A673 (cell line): ENCODE measurements at regions of chr15 and their contacts with region 1.

Region 1: GRCh38 chr15:80120636-80121035 is 32.2 kb upstream of the FAH start:
- DNase-seq: no peak
- H3K4me3 ChIP-seq: no peak overlapping the region
- H3K27ac ChIP-seq: no peak overlapping the region
- H3K4me1 ChIP-seq: peaks cover 3% of the 10 kb centered on the region
- H3K27me3 ChIP-seq: no peaks in the 10 kb centered on the region
- CTCF ChIP-seq: no peak

Region 2: DNA sequence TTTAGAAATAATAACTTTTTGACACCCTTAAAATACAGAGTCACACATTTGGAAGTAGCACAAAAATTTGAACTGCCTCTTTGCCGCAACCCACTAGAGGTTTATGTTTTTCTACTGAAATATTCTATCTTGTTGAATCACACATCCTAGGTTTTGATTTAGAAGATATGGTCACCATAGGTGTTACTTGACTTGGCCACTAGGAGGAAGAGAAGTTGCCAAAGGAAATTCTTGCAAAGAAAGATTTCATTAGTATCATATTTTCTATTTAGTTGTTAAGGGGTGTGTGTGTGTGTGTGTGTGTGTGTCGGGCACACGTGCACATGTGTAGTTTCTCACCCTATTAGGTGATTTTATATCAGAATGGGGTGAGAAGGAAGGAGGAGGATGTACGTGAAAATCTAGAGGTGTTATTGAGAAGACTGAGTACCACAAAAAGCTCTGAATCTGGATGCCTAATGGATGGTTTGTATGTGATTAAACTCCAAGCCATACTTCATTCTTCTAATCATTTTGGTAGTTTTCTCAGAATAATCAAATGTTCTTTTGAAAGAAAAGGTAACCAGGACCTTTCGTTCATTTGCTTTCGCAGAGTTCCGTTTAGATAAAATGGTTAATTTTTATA is 29.6 kb before region 1 on chr15:
- CTCF ChIA-PET with region 1: no interaction called
- POLR2A ChIA-PET with region 1: no interaction called
- intact Hi-C with region 1: loop called (anchors 1 kb)
- DNase-seq: no peak
- H3K4me3 ChIP-seq: no peak overlapping the region
- H3K27ac ChIP-seq: no peak overlapping the region
- H3K4me1 ChIP-seq: peaks cover 7% of the 10 kb centered on the region
- H3K27me3 ChIP-seq: no peaks in the 10 kb centered on the region
- CTCF ChIP-seq: peak; percentile 40

Region 3: DNA sequence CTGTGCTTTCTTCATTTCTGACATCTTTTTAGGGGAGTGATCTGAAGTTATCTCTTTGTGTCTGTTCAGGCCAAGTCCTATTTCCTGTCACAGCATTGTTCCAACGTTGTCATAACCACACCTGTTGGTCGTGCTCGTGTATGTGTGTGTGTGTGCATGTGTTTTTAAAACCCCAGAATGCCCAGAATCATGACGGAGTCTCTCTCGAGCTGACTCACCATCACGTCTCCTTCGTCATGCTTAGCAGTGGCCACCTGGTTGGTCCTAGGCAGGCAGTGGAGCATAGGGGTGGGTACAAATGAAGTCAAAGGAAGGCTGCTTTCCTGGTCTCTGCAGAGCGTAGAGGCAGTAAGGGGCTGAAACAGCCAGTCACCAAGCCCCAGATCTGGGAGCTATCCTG is 447.7 kb after region 1 on chr15:
- CTCF ChIA-PET with region 1: no interaction called
- POLR2A ChIA-PET with region 1: no interaction called
- intact Hi-C with region 1: no loop called
- DNase-seq: no peak
- H3K4me3 ChIP-seq: no peak overlapping the region
- H3K27ac ChIP-seq: no peak overlapping the region
- H3K4me1 ChIP-seq: no peaks in the 10 kb centered on the region
- H3K27me3 ChIP-seq: no peaks in the 10 kb centered on the region
- CTCF ChIP-seq: no peak